MCF 10A (cell line): ENCODE measurements at regions of chr7 and their contacts with region 1.

Region 1: GRCh38 chr7:129635300-129636029 is 23.9 kb downstream of the NRF1 start:
- DNase-seq: peak; percentile 80
- H3K4me3 Mint-ChIP-seq: no peak overlapping the region
- H3K27ac Mint-ChIP-seq: no peak overlapping the region
- H3K4me1 Mint-ChIP-seq: peaks cover 12% of the 10 kb centered on the region
- H3K27me3 Mint-ChIP-seq: no peaks in the 10 kb centered on the region
- CTCF ChIP-seq: peak; percentile 64

Region 2: DNA sequence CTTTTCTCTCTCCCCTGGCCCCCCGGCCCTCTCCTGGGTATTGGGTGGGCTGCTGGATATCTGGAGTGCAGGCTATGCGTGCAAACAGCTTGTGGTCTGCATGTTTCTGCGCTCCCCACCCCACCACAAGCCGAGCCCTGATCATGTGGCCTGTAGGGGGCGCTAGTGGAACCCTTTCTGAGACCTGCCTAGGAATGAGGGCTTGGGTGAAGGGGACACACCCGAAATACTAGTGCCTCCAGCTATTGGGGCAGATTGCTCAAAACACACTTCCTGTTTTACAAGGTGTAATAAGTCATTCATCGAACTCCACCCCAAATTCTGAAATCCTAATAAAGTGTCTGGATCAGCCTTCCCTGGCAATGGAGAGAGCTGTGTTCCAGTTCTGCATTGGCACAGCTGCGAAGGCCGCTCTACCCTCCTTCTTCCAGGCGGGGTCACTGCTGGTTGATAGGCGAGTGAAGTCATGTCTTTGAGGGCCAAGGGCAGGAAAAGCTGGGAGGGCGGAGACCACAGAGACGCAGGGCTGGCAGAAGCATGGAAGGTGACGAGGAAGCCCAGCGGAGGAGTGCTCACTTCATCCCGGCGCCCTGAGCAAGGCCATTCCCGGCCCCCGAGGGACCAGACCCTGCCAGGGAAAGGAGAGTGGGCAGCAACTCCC is 1254.2 kb before region 1 on chr7:
- CTCF ChIA-PET with region 1: no interaction called
- POLR2A ChIA-PET with region 1: no interaction called
- intact Hi-C with region 1: no loop called
- DNase-seq: peak; percentile 81
- H3K4me3 Mint-ChIP-seq: no peak overlapping the region
- H3K27ac Mint-ChIP-seq: no peak overlapping the region
- H3K4me1 Mint-ChIP-seq: peaks cover 11% of the 10 kb centered on the region
- H3K27me3 Mint-ChIP-seq: no peaks in the 10 kb centered on the region
- CTCF ChIP-seq: peak; percentile 75

Region 3: GRCh38 chr7:129462420-129462819 is 173.0 kb before region 1 on chr7:
- CTCF ChIA-PET with region 1: no interaction called
- POLR2A ChIA-PET with region 1: no interaction called
- intact Hi-C with region 1: no loop called
- DNase-seq: no peak
- H3K4me3 Mint-ChIP-seq: no peak overlapping the region
- H3K27ac Mint-ChIP-seq: no peak overlapping the region
- H3K4me1 Mint-ChIP-seq: no peaks in the 10 kb centered on the region
- H3K27me3 Mint-ChIP-seq: no peaks in the 10 kb centered on the region
- CTCF ChIP-seq: no peak

Region 4: DNA sequence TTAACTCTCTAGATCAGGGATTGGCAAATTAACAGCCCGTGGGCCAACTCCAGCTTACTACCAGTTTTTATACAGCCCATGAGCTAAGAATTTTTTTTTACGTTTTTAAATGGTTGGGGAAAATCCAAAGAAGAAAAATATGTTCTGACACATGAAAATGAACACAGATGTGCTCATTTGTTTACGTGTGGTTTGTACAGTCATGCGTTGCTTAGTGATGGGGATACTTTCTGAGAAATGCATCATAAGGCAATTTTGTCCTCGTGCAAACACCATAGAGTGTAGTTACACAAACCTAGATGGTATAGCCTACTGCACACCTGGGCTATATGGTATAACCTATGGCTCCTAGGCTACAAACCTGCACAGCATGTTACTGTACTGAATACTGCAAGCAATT is 141.4 kb before region 1 on chr7:
- CTCF ChIA-PET with region 1: interaction called, 3 read pairs
- POLR2A ChIA-PET with region 1: no interaction called
- intact Hi-C with region 1: loop called (anchors 5 kb)
- DNase-seq: peak; percentile 61
- H3K4me3 Mint-ChIP-seq: no peak overlapping the region
- H3K27ac Mint-ChIP-seq: peak overlapping the region; percentile 89
- H3K4me1 Mint-ChIP-seq: no peaks in the 10 kb centered on the region
- H3K27me3 Mint-ChIP-seq: no peaks in the 10 kb centered on the region
- CTCF ChIP-seq: no peak